ENCODE measurements at regions of chr2 and their contacts with region 1.

Region 1: DNA sequence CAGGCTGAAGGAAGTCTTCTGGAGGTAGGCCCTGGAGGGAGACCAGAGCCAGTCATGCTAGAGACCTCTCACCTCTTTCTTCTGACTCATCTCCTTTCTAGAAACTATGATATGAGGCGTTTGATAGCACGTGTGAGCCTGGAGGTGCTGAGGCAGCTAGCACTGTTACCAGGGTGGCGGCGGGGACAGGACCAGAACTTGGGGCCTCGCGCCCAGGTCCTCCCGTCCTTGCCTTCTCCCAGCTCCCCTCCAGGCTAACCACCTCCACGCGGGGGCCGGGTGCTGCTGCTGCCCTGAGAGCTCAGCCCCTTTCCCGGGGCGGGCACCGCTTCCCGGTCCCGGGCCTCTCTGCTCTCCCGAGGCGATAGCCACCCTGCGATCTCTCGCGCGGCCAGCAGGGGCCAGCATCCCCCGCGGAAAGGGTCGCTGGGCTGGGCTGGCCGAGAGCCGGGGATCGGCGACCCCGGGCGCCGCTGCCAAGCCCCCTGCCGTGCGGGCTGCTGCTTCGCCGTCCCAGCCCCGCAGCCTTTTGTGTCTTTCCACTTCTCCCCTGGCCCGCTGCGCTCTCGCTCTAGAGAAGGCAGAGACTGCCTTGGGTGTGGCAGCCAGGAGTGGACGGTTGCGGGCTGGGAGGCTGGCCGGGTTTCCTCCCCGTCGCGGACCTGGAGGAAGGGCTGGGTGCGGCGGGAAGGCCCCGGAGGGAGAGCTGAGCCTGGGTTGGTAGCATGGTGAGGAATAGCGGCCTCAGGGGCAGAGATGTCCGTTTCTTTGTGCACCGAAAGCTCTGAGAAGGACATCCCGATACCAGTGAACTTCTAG is 49.1 kb downstream of the TMEM17 start:
- DNase-seq: peak; percentile 89

Region 2: DNA sequence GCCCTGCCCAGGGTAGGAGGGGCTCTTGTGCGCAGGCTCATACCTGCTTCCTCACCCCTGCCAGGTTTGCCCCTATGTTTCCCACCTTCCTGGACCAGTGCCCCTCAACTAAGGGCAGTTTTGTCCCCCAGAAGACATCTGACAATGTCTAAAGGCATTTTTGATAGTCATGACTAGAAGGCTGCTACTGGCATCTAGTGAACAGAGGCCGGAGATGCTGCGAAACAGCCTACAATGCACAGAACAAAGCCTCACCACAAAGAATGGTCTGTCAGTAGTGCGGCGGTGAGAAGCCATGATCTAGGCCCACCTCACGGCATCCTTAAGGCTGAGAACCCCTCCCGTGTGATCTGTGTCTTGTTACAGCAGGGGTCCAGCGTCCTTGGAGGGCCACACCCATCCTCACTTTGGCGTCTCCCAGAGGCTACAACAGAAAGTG is 46.9 kb before region 1 on chr2:
- intact Hi-C with region 1: no loop called
- DNase-seq: peak; percentile 64

Region 3: GRCh38 chr2:62705007-62705829 is 248.3 kb after region 1 on chr2 and contains the start of gene EHBP1:
- intact Hi-C with region 1: loop called (anchors 5 kb)
- DNase-seq: peak; percentile 100
- total RNA-seq, gene EHBP1: 64.6 to 67.6 TPM

Region 4: GRCh38 chr2:62774555-62775366 is 317.8 kb after region 1 on chr2:
- intact Hi-C with region 1: loop called in 1 of 2 experiments (anchors 1 kb)
- DNase-seq: no peak

Region 5: DNA sequence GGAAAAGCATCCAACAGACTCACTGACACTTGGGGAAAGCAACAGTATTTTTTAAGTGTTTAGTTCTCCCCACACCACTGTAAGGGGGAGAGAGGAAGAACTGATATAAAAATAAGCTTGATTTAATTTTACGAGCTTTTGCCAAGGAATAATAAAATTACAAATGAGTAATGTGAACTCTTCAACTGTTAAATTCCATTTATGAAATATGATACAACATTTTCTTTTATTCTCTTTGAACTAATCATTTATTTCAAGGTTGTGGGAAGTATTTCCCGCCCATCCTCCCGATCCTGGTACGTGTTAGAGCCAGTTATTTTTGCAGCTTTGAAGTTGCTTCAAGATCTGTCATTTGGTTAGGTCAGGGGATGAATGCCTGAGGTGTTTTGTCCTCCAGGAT is 1096.1 kb after region 1 on chr2:
- intact Hi-C with region 1: loop called in 1 of 2 experiments (anchors 10 kb)
- DNase-seq: no peak